Cardiac septum (tissue), 1 donor: ENCODE measurements at regions of chr17 and their contacts with region 1.

Region 1: GRCh38 chr17:7627250-7628121 is at the start of gene SAT2:
- DNase-seq: peak; percentile 96
- total RNA-seq, gene SAT2: 60.3 TPM

Region 2: GRCh38 chr17:7177196-7177953 is 450.1 kb before region 1 on chr17:
- intact Hi-C with region 1: no loop called
- DNase-seq: peak; percentile 87

Region 3: GRCh38 chr17:7214300-7215135 is 413.0 kb before region 1 on chr17:
- intact Hi-C with region 1: no loop called
- DNase-seq: peak; percentile 99

Region 4: DNA sequence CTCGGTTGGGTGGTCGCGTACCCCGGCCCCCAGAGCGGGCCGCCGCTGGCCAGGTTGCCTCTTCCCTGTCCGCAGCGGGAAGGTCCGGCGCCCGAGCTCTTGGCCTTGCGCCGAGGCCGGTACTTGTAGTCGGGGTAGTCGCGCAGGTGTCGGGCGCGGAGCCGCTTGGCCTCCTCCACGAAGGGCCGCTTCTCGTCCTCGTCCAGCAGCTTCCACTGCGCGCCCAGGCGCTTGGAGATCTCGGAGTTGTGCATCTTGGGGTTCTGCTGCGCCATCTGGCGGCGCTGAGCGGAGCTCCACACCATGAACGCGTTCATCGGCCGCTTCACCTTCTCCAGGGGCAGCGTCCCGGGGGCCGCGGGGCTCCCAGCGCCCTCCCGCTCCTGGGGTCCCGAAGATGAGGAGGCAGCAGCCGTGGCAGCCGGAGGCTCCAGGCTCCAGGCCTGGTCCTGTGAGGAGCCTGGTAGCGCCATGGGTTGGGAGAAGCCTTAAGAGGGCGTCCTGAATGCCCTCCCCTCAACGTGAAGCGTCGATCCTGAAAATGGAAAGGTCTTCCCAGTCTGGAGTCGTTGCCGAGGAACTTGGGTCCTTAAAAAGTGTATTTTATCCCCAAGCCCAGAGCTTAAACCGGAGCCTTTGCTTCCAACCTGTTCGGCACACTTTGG is 38.1 kb before region 1 on chr17:
- intact Hi-C with region 1: loop called (anchors 5 kb)
- DNase-seq: peak; percentile 92

Region 5: GRCh38 chr17:7704601-7705268 is 77.2 kb after region 1 on chr17 and contains the start of gene EFNB3:
- intact Hi-C with region 1: no loop called
- DNase-seq: no peak
- total RNA-seq, gene EFNB3: 0.78 TPM

Region 6: DNA sequence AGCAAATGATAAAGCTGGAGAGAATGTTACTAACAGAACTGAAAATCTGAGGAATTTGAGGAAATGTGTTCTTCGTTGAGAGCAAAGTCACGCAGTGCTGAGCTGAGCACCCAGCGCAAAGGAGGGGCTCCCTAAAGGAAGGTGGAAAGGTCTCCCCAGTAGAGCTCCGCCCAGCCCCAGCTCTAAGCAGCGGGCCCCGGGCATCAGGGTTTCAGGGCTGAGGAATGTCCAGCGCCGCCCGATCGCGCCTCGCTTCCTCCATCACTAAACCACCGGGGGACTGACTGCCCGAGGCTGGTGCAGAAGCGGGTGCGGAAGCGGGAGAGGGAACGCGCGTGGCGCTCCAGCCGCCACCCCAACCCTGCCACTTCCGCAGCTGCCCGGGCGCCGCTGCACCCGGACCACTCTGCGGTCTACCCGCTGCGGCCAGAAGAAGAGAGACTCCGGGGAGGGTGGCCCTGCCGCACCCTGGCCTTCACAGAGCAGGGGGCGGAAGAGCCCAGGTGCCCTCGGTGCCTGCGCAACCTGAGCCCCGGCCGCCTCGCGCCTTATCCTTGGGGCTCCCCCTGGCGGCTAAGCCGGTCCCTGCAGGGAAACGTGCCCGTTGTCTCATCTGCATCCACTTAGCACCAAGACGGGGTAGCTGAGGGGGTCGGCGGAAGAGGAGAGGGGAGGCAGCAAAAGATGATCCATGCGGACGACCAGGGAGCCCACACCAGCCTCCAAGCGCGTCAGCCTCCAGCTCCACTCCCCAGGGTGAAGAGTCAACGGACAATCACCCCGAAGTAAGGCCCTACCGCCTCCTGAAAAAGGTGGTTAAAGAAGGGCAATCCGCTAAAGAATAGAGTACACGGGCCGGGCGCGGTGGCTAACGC is 362.5 kb after region 1 on chr17:
- intact Hi-C with region 1: no loop called
- DNase-seq: peak; percentile 93